Gastrocnemius medialis (tissue), 4 donors: ENCODE measurements at regions of chr10 and their contacts with region 1.

Region 1: DNA sequence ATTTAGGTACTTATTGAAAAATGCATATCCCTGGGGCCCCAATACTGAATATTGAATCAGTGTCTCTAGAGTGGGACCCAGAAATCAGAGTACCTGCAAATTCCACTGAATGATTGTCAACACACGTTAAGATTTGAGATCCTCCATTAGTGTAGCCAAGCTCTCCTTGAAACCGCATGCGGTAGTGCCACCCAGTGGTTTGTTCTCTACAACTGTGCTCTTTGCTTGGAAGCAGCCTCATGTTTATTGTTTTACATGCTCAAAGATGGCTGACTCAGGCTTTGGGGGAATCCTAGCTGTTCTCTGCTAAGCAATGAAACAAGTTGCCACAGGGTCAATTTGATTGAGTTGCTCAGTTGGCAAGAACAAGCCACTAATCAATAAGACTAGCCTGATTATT is 340.2 kb upstream of the CELF2 start:
- DNase-seq: peak; percentile 41 to 61
- ATAC-seq: peak; percentile 88 to 94
- H3K4me3 ChIP-seq: no peak overlapping the region
- H3K27ac ChIP-seq: no peak overlapping the region
- H3K4me1 ChIP-seq: no peaks in the 10 kb centered on the region
- H3K27me3 ChIP-seq: no peaks in the 10 kb centered on the region
- CTCF ChIP-seq: peak in 4 of 5 experiments; percentile 18 to 59 (median 41)
- POLR2A ChIP-seq: no peak

Region 2: DNA sequence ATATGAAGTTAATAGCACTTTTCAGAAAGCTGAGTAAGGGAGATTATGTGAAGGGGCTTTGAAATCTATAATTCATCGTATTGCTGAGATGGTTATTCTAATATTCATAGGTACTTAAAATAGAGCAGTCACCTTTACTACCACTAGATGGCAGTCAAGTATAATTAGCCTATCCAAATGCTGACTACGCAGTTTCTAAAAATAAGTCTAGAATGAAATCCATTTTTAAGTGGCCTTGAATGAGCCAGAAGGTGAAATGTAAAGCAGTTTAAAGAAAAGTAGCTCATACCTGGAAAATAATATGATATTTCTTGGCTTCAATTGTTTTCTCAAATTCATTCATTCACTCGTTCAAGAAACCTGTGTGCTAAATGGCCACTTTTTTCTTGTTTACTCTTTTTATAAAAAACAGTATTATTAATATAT is 1345.9 kb before region 1 on chr10:
- in situ Hi-C with region 1: loop called in 1 of 4 experiments (anchors 25 kb)
- intact Hi-C with region 1: no loop called
- DNase-seq: no peak
- ATAC-seq: peak; percentile 16 to 65
- H3K4me3 ChIP-seq: no peak overlapping the region
- H3K27ac ChIP-seq: no peak overlapping the region
- H3K4me1 ChIP-seq: no peaks in the 10 kb centered on the region
- H3K27me3 ChIP-seq: no peaks in the 10 kb centered on the region
- CTCF ChIP-seq: peak; percentile 28 to 74 (median 66)
- POLR2A ChIP-seq: no peak

Region 3: DNA sequence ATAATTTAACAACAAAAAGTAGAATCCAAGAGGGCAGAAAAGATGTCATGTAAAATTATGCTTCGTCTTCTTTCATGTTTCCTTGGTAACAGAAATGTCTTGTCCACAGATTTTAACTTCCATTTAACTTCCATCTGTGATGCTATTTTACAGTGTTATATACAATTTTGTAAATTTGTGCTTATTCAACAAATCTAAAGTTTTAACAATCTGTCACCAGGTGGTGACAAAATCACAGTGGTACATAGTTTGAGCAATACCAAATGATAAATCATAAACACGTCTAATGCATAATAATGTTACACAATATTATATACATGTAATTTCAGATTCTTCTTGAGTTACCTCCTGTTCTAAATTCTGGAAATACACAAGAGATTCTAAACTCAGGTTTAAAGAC is 444.2 kb before region 1 on chr10:
- in situ Hi-C with region 1: loop called in 1 of 4 experiments (anchors 25 kb)
- intact Hi-C with region 1: loop called (anchors 5 kb)
- DNase-seq: no peak
- ATAC-seq: no peak
- H3K4me3 ChIP-seq: no peak overlapping the region
- H3K27ac ChIP-seq: no peak overlapping the region
- H3K4me1 ChIP-seq: no peaks in the 10 kb centered on the region
- H3K27me3 ChIP-seq: no peaks in the 10 kb centered on the region
- CTCF ChIP-seq: peak in 2 of 5 experiments; percentile 9 to 17
- POLR2A ChIP-seq: no peak

Region 4: DNA sequence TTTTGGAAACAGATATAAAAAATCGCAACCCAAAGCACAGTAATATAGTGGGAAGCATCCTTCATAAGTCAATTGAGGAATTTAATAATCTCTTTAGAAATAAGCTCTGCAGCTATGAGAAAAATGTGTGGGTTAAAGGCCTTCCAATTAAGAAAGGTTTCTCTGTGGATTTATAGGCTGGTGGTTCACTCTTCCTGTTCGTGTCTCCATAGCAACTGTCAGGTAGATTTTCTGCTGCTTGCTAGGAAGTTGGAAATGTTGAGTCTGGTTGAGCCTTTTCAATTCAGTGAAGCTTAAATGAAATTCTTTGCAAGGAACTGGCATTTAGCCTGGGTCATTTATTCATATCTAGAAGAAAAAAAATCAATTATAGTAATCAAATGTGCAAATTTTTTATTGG is 312.6 kb before region 1 on chr10:
- in situ Hi-C with region 1: loop called in 1 of 4 experiments (anchors 10 kb)
- intact Hi-C with region 1: no loop called
- DNase-seq: no peak
- ATAC-seq: no peak
- H3K4me3 ChIP-seq: no peak overlapping the region
- H3K27ac ChIP-seq: no peak overlapping the region
- H3K4me1 ChIP-seq: no peaks in the 10 kb centered on the region
- H3K27me3 ChIP-seq: no peaks in the 10 kb centered on the region
- CTCF ChIP-seq: no peak
- POLR2A ChIP-seq: no peak

Region 5: GRCh38 chr10:10515479-10516204 is 161.8 kb before region 1 on chr10:
- in situ Hi-C with region 1: no loop called
- intact Hi-C with region 1: loop called (anchors 10 kb)
- DNase-seq: no peak
- ATAC-seq: peak; percentile 24 to 62
- H3K4me3 ChIP-seq: peak overlapping the region in 1 of 4 donors; percentile 14
- H3K27ac ChIP-seq: no peak overlapping the region
- H3K4me1 ChIP-seq: no peaks in the 10 kb centered on the region
- H3K27me3 ChIP-seq: peaks cover 0 to 3% (median 0%) of the 10 kb centered on the region in 3 donors
- CTCF ChIP-seq: no peak
- POLR2A ChIP-seq: no peak